ENCODE measurements at regions of chr12 and their contacts with region 1.

Region 1: GRCh38 chr12:133181238-133181959 is at the start of gene ZNF268:
- DNase-seq: peak; percentile 91 to 98
- H3K4me3 ChIP-seq: peak within 1 kb of the TSS; percentile 84 to 100 (median 93)
- H3K27ac ChIP-seq: peak within 1 kb of the TSS; percentile 90
- H3K4me1 ChIP-seq: no peaks in the 10 kb centered on the region
- H3K27me3 ChIP-seq: no peaks in the 10 kb centered on the region
- CTCF ChIP-seq: peak; percentile 78 to 80 (median 80)
- EP300 ChIP-seq: peak in 1 of 2 experiments; percentile 59; a peak in 1 of 3 replicates
- POLR2A ChIP-seq: peak; percentile 85 to 94
- RAD21 ChIP-seq: peak; percentile 78 to 79
- total RNA-seq, gene ZNF268: 22.3 and 23.5 TPM in 2 replicates

Region 2: GRCh38 chr12:133080368-133081158 is 100.8 kb before region 1 on chr12 and contains the start of gene ZNF140:
- CTCF ChIA-PET with region 1: interaction called, 7 read pairs
- POLR2A ChIA-PET with region 1: interaction called, 25 read pairs
- DNase-seq: peak; percentile 94
- H3K4me3 ChIP-seq: peak within 1 kb of the TSS; percentile 89 to 100 (median 94)
- H3K27ac ChIP-seq: peak within 1 kb of the TSS; percentile 97
- H3K4me1 ChIP-seq: no peaks in the 10 kb centered on the region
- H3K27me3 ChIP-seq: no peaks in the 10 kb centered on the region
- CTCF ChIP-seq: peak in 2 of 3 experiments; percentile 6 to 14; a peak in 2 of 4 replicates
- EP300 ChIP-seq: no peak
- POLR2A ChIP-seq: peak in 1 of 2 experiments; percentile 89; a peak in 2 of 3 replicates
- RAD21 ChIP-seq: peak; percentile 36 to 37; a peak in 3 of 4 replicates
- total RNA-seq, gene ZNF140: 13.8 and 14.3 TPM in 2 replicates

Region 3: GRCh38 chr12:133130038-133130807 is 51.2 kb before region 1 on chr12 and contains the starts of genes ZNF10 and ZNF891:
- CTCF ChIA-PET with region 1: no interaction called
- POLR2A ChIA-PET with region 1: interaction called, 14 read pairs
- DNase-seq: peak; percentile 88 to 98
- H3K4me3 ChIP-seq: peak within 1 kb of the TSS; percentile 69 to 98 (median 87)
- H3K27ac ChIP-seq: peak within 1 kb of the TSS; percentile 87
- H3K4me1 ChIP-seq: no peaks in the 10 kb centered on the region
- H3K27me3 ChIP-seq: no peaks in the 10 kb centered on the region
- CTCF ChIP-seq: no peak
- EP300 ChIP-seq: no peak
- POLR2A ChIP-seq: peak; percentile 92 to 95
- RAD21 ChIP-seq: no peak
- total RNA-seq, gene ZNF10: 11.9 and 13.7 TPM in 2 replicates
- total RNA-seq, gene ZNF891: 3.1 TPM in 2 replicates

Region 4: DNA sequence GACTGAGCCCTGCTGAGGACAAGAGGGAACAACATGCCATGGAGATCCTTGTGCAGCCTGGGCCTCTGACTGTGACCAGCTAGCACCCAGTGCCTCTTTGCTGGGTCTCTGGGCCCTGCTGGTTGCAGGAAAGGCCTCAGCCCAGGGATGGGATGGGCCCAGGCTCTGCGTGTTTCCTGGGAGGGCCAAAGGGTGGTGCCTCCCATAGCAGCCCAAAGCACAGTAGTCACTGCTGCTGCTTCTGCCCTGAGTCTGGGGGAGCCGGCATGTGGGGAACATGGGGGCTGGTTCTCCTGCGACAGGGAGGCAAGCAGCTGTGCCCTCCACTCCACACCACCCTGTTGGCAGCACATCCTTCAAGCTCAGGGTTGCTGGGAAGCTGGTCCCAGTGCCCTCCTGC is 35.8 kb after region 1 on chr12:
- CTCF ChIA-PET with region 1: no interaction called
- POLR2A ChIA-PET with region 1: no interaction called
- DNase-seq: no peak
- H3K4me3 ChIP-seq: no peak overlapping the region
- H3K27ac ChIP-seq: no peak overlapping the region
- H3K4me1 ChIP-seq: no peaks in the 10 kb centered on the region
- H3K27me3 ChIP-seq: no peaks in the 10 kb centered on the region
- CTCF ChIP-seq: no peak
- EP300 ChIP-seq: no peak
- POLR2A ChIP-seq: no peak
- RAD21 ChIP-seq: no peak

Region 5: DNA sequence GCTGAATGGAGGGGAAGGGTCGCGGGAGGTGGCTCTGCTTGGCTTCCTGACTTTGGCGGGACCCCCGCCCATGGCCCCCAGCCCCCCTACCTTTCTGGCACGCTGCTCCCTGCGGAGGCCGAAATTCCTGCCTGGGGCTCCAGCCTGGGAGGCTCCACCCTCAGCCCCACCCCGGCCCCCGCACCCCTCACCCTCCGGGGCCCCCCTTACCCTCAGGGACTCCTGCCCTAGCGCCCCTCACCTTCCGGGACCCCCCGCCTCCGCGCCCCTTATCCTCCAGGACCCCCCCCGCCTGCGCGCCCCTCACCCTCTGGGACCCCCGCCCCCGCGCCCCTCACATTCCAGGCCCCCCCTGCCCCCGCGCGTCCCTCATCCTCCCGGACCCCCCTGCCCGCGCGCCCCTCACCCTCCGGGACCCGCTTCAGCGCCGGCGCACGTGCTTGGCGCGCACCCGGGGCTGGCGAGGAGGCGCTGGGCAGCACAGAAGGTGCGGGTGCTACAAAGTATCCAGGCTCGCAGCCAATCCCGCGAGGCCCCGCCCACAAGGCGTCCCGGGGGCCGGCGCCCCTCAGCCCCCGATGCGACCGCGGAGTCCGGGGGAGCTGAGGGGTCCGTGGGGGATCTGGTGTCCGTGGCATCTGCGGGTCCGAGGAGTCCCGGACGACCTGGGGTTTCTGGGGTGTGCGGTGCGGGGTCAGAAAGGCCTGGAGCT is 54.2 kb after region 1 on chr12 and contains the start of gene ANHX:
- CTCF ChIA-PET with region 1: no interaction called
- POLR2A ChIA-PET with region 1: no interaction called
- DNase-seq: no peak
- H3K4me3 ChIP-seq: no peak within 1 kb of the TSS
- H3K27ac ChIP-seq: no peak within 1 kb of the TSS
- H3K4me1 ChIP-seq: no peaks in the 10 kb centered on the region
- H3K27me3 ChIP-seq: no peaks in the 10 kb centered on the region
- CTCF ChIP-seq: no peak
- EP300 ChIP-seq: no peak
- POLR2A ChIP-seq: no peak
- RAD21 ChIP-seq: no peak
- total RNA-seq, gene ANHX: not detected in 2 replicates